HepG2 (cell line): ENCODE measurements at regions of chr14 and their contacts with region 1.

Region 1: DNA sequence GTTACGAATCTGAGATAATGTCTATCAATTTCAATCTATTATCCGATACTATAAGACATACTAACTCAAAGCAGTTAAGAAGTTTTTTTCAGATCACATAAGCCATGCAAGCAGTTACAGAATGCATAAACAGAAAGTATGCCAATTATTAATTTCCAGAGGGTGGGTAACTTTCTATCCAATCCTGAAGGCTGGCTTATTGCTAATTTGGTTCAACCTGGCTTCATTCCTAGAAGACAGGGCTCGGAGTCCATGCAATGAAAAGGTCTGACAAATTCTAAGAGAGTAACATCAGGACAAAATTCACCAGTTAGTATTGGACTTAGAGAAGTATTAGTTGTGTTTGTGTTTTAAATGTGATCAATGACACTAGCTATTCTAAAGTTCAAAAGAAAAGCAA is 15.0 kb downstream of the FERMT2 start:
- DNase-seq: no peak
- ATAC-seq: no peak
- H3K4me3 ChIP-seq: no peak overlapping the region
- H3K27ac ChIP-seq: peak overlapping the region; percentile 9
- H3K4me1 ChIP-seq: peaks cover 37% of the 10 kb centered on the region
- H3K27me3 ChIP-seq: no peaks in the 10 kb centered on the region
- CTCF ChIP-seq: no peak
- EP300 ChIP-seq: no peak
- POLR2A ChIP-seq: no peak
- RAD21 ChIP-seq: no peak

Region 2: GRCh38 chr14:52950898-52951689 is 15.3 kb after region 1 on chr14 and contains the start of gene FERMT2:
- CTCF ChIA-PET with region 1: no interaction called
- POLR2A ChIA-PET with region 1: interaction called, 7 read pairs
- in situ Hi-C with region 1: no loop called
- intact Hi-C with region 1: loop called (anchors 2 kb)
- DNase-seq: peak; percentile 79
- ATAC-seq: peak; percentile 92
- H3K4me3 ChIP-seq: peak within 1 kb of the TSS; percentile 85 to 95 (median 92)
- H3K27ac ChIP-seq: peak within 1 kb of the TSS; percentile 96
- H3K4me1 ChIP-seq: peaks cover 52% of the 10 kb centered on the region
- H3K27me3 ChIP-seq: no peaks in the 10 kb centered on the region; a peak in 1 of 5 replicates
- CTCF ChIP-seq: no peak; the same call in 1 of the 2 replicates
- EP300 ChIP-seq: no peak
- POLR2A ChIP-seq: peak; percentile 57 to 85
- RAD21 ChIP-seq: peak; percentile 65
- total RNA-seq, gene FERMT2: 60.4 and 86.5 TPM in 2 replicates